H1 (cell line): ENCODE measurements at regions of chr13 and their contacts with region 1.

Region 1: DNA sequence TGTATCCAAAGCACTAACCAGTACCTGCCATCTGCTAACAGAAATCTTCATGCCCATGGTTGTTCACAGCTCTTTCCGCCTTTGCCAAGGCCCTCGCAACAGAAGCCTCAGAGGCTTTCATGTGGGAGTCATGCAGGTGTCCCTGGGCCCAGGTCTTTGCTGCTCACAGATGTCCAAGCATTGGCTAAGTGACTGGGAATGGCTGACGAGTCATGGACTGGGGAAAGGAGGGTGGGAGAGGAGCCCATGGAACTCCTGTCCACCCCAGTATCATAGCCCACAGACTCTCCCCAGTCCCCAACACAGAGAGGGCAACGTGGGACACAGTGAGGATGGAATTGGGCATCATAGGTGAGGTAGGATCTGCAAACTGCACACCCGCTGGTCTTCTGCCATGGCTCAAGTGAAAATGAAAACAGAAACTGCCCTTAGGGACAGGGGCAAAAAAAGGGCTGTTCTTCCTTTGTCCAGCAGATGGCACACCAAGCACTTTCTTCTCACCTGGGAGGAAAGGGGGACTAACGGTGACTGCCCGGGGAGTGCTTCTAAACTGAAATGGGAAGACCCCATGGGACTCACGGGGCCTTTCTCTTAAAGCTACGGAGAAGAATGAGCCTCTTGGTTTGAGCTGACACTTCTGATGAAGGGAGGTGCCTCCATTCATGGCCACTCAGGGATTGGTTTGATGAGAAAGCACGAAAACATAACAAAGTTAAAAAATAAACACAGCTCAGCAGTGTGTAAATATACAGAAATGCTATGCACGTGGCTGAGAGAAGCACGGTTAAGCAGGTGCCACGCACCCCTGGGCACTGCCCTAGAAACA is 11.1 kb upstream of the DHRS12 start:
- DNase-seq: peak in 1 of 2 experiments; percentile 90
- H3K4me3 ChIP-seq: peak overlapping the region in 1 of 4 experiments; percentile 8; a peak in 1 of 8 replicates
- H3K27ac ChIP-seq: no peak overlapping the region
- H3K4me1 ChIP-seq: peaks cover 0 to 16% (median 7%) of the 10 kb centered on the region in 4 experiments; a peak in 5 of 7 replicates
- H3K27me3 ChIP-seq: peaks cover 0 to 3% (median 1%) of the 10 kb centered on the region in 4 experiments; a peak in 2 of 7 replicates
- CTCF ChIP-seq: peak; percentile 60 to 92 (median 86)
- EP300 ChIP-seq: no peak
- POLR2A ChIP-seq: no peak
- RAD21 ChIP-seq: peak; percentile 85 to 94

Region 2: GRCh38 chr13:51583875-51584730 is 230.9 kb before region 1 on chr13 and contains the start of gene WDFY2:
- CTCF ChIA-PET with region 1: no interaction called
- POLR2A ChIA-PET with region 1: no interaction called
- DNase-seq: peak; percentile 100
- H3K4me3 ChIP-seq: peak within 1 kb of the TSS; percentile 76 to 94 (median 92)
- H3K27ac ChIP-seq: peak within 1 kb of the TSS; percentile 86
- H3K4me1 ChIP-seq: peaks cover 3 to 17% (median 9%) of the 10 kb centered on the region in 4 experiments; a peak in 6 of 7 replicates
- H3K27me3 ChIP-seq: no peaks in the 10 kb centered on the region
- CTCF ChIP-seq: no peak
- EP300 ChIP-seq: peak in 1 of 2 experiments; percentile 70; a peak in 1 of 3 replicates
- POLR2A ChIP-seq: peak; percentile 31 to 87
- RAD21 ChIP-seq: peak; percentile 6 to 11; a peak in 2 of 4 replicates
- total RNA-seq, gene WDFY2: 29.0 and 31.1 TPM in 2 replicates

Region 3: DNA sequence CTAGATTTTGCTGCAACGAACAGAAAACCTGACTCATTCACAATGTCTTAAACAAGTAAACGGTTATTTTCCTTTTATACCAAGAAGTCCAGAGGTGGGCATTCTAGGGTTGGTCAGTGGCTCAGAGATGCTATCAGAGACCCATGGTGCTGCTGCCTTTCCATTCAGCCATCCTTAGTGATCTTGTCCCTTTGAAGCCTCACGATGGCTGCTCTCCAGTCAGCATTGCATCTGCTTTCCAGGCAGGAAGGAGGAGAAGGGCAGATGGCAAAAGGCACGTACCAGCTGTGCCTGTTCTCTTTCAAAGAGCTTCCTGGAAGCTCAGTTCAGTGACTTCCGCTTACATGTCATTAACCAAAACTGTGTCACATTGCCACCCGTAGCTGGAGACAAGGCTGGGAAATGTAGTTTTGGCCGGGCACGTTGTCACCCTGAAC is 200.7 kb before region 1 on chr13:
- CTCF ChIA-PET with region 1: no interaction called
- POLR2A ChIA-PET with region 1: no interaction called
- DNase-seq: no peak
- H3K4me3 ChIP-seq: no peak overlapping the region
- H3K27ac ChIP-seq: no peak overlapping the region
- H3K4me1 ChIP-seq: peaks cover 1 to 14% (median 5%) of the 10 kb centered on the region in 4 experiments; a peak in 6 of 7 replicates
- H3K27me3 ChIP-seq: no peaks in the 10 kb centered on the region
- CTCF ChIP-seq: no peak
- EP300 ChIP-seq: no peak
- POLR2A ChIP-seq: no peak
- RAD21 ChIP-seq: no peak

Region 4: GRCh38 chr13:51797664-51798488 is 17.2 kb before region 1 on chr13:
- CTCF ChIA-PET with region 1: interaction called, 24 read pairs
- POLR2A ChIA-PET with region 1: interaction called, 3 read pairs
- DNase-seq: peak in 1 of 2 experiments; percentile 55
- H3K4me3 ChIP-seq: no peak overlapping the region
- H3K27ac ChIP-seq: no peak overlapping the region
- H3K4me1 ChIP-seq: peaks cover 4 to 18% (median 6%) of the 10 kb centered on the region in 4 experiments
- H3K27me3 ChIP-seq: no peaks in the 10 kb centered on the region
- CTCF ChIP-seq: peak; percentile 36 to 84 (median 63)
- EP300 ChIP-seq: no peak
- POLR2A ChIP-seq: no peak
- RAD21 ChIP-seq: peak; percentile 90 to 92

Region 5: GRCh38 chr13:51804295-51805172 is 10.5 kb before region 1 on chr13:
- CTCF ChIA-PET with region 1: interaction called, 98 read pairs
- POLR2A ChIA-PET with region 1: interaction called, 5 read pairs
- DNase-seq: no peak
- H3K4me3 ChIP-seq: peak overlapping the region; percentile 69 to 80 (median 78)
- H3K27ac ChIP-seq: peak overlapping the region; percentile 88
- H3K4me1 ChIP-seq: peaks cover 12 to 19% (median 16%) of the 10 kb centered on the region in 4 experiments
- H3K27me3 ChIP-seq: 0 out of 7 replicates have a peak, but pooled peaks cover 0 to 2% (median 0%) of the 10 kb centered on the region in 4 experiments
- CTCF ChIP-seq: no peak
- EP300 ChIP-seq: no peak
- POLR2A ChIP-seq: no peak
- RAD21 ChIP-seq: no peak

Region 6: DNA sequence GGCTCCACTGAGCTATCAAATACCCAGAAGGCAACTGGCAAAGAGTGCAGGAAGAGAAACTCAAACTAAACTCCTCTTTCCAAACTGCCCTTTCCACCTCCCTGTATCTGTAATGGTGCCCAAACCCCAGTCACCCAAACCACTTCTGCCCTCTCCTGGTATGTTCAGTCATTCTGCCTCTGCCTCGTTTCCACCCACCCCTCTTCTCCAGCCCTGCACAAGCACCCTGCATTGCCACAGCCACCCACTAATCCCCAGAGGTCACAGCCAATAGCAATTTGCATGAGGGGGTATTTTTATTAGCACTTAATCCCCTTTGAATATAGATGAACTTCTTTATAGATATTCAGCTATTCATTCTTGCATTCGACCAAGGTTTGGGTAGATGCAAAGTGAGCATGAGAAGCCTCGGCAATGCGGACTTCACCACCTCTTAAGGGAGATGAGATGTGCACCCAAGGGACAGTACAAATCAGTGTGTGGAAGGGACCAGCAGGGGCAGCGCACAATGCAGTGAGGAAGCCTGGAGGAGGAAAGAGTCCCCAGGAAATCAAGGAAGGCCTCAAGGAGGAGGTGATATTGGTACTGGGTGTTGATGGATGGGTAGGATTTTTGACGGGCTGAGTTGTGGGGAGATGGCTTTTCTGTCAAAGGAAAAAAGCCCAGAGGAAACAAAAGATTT is 17.6 kb after region 1 on chr13:
- CTCF ChIA-PET with region 1: interaction called, 105 read pairs
- POLR2A ChIA-PET with region 1: no interaction called
- DNase-seq: no peak
- H3K4me3 ChIP-seq: no peak overlapping the region
- H3K27ac ChIP-seq: no peak overlapping the region
- H3K4me1 ChIP-seq: no peaks in the 10 kb centered on the region
- H3K27me3 ChIP-seq: no peaks in the 10 kb centered on the region
- CTCF ChIP-seq: peak; percentile 64 to 70 (median 67)
- EP300 ChIP-seq: no peak
- POLR2A ChIP-seq: no peak
- RAD21 ChIP-seq: peak; percentile 74 to 75

Region 7: DNA sequence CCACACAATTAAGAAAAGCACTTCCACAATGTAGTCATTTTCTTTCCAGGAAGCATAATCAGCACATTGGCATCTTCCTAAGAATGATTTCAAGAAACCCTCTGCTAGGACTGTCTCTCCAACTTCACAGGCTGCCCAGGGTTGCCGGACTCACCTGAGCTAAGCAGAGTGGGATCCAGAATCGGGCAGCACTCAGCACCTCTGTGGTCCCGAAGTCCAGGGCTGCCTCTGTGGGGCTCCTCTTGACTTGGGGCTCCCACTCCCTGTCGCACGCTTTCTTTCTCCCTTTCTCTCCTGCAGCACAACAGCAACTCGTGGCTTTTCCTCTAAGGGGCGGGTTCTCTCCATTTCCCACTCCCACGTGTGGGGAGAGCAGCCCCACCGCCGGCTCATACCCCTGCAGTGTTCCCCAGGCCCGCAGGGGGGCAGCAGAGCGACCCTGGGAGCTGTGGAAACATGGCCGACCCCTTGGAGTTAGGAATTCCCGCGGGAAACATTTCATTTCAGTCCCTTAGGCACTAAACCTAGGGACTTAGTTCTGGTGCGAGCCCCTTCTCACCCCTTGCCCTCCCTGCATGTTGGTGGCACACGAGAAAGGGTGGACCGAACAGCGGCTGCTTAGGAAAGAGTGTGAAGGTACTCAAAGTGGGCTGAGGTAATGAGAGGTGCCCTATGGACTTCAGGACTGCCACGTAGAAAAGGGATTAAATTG is 30.0 kb after region 1 on chr13 and contains the start of gene TMEM272:
- CTCF ChIA-PET with region 1: interaction called, 18 read pairs
- POLR2A ChIA-PET with region 1: no interaction called
- DNase-seq: peak in 1 of 2 experiments; percentile 94
- H3K4me3 ChIP-seq: no peak within 1 kb of the TSS
- H3K27ac ChIP-seq: no peak within 1 kb of the TSS
- H3K4me1 ChIP-seq: 0 out of 7 replicates have a peak, but pooled peaks cover 0 to 2% (median 0%) of the 10 kb centered on the region in 4 experiments
- H3K27me3 ChIP-seq: no peaks in the 10 kb centered on the region
- CTCF ChIP-seq: peak; percentile 75 to 88 (median 87)
- EP300 ChIP-seq: no peak
- POLR2A ChIP-seq: no peak
- RAD21 ChIP-seq: peak; percentile 50 to 60
- total RNA-seq, gene TMEM272: not detected in 2 replicates

Region 8: GRCh38 chr13:51911860-51912510 is 96.9 kb after region 1 on chr13:
- CTCF ChIA-PET with region 1: interaction called, 13 read pairs
- POLR2A ChIA-PET with region 1: no interaction called
- DNase-seq: no peak
- H3K4me3 ChIP-seq: no peak overlapping the region
- H3K27ac ChIP-seq: no peak overlapping the region
- H3K4me1 ChIP-seq: no peaks in the 10 kb centered on the region; a peak in 2 of 7 replicates
- H3K27me3 ChIP-seq: no peaks in the 10 kb centered on the region
- CTCF ChIP-seq: no peak
- EP300 ChIP-seq: no peak
- POLR2A ChIP-seq: no peak
- RAD21 ChIP-seq: no peak

Region 9: DNA sequence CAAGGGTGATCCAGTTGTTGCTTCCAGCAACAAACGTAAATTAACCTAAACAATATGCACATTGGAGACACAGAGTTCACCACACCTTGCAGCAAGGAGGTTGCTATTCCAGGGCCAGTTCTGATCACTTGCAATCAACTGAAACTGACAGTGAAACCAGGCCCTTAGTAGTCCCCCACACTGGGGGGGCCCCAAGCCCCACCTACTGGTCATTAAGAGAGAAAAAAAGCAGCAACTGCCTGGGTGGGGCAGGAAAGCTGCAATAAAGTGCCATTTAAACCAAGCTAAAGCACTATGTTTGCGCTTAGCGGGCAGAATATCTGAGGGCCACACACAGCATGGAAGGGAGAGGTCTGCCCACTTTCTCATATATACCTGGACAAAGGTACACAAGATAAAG is 144.7 kb after region 1 on chr13:
- CTCF ChIA-PET with region 1: no interaction called
- POLR2A ChIA-PET with region 1: no interaction called
- DNase-seq: no peak
- H3K4me3 ChIP-seq: no peak overlapping the region
- H3K27ac ChIP-seq: no peak overlapping the region
- H3K4me1 ChIP-seq: no peaks in the 10 kb centered on the region
- H3K27me3 ChIP-seq: no peaks in the 10 kb centered on the region
- CTCF ChIP-seq: no peak
- EP300 ChIP-seq: no peak
- POLR2A ChIP-seq: no peak
- RAD21 ChIP-seq: no peak